ENCODE measurements at regions of chr15 and their contacts with region 1.

Region 1: GRCh38 chr15:86164232-86164898 is 84.7 kb downstream of the AGBL1 start:
- DNase-seq: peak; percentile 75 to 76
- ATAC-seq: peak; percentile 72 to 81
- H3K4me3 ChIP-seq: no peak overlapping the region
- H3K27ac ChIP-seq: peak overlapping the region; percentile 85 to 98 (median 98)
- H3K4me1 ChIP-seq: peaks cover 63 to 67% of the 10 kb centered on the region in 2 donors
- H3K27me3 ChIP-seq: no peaks in the 10 kb centered on the region
- CTCF ChIP-seq: no peak
- POLR2A ChIP-seq: peak; percentile 56 to 78

Region 2: GRCh38 chr15:85318048-85318731 is 846.2 kb before region 1 on chr15:
- in situ Hi-C with region 1: no loop called
- intact Hi-C with region 1: no loop called
- DNase-seq: no peak
- ATAC-seq: no peak
- H3K4me3 ChIP-seq: no peak overlapping the region
- H3K27ac ChIP-seq: no peak overlapping the region
- H3K4me1 ChIP-seq: no peaks in the 10 kb centered on the region
- H3K27me3 ChIP-seq: no peaks in the 10 kb centered on the region
- CTCF ChIP-seq: no peak
- POLR2A ChIP-seq: no peak

Region 3: GRCh38 chr15:86079508-86080266 is 84.7 kb before region 1 on chr15 and contains the start of gene AGBL1:
- in situ Hi-C with region 1: no loop called
- intact Hi-C with region 1: loop called (anchors 1 kb)
- DNase-seq: peak; percentile 87 to 98
- ATAC-seq: peak; percentile 78 to 83
- H3K4me3 ChIP-seq: peak within 1 kb of the TSS; percentile 19 to 44 (median 31)
- H3K27ac ChIP-seq: peak within 1 kb of the TSS; percentile 89 to 92 (median 90)
- H3K4me1 ChIP-seq: peaks cover 81 to 85% of the 10 kb centered on the region in 2 donors
- H3K27me3 ChIP-seq: no peaks in the 10 kb centered on the region
- CTCF ChIP-seq: peak in 3 of 5 experiments; percentile 21 to 27 (median 24)
- POLR2A ChIP-seq: peak; percentile 42 to 85
- total RNA-seq, gene AGBL1: 3.8 to 29.7 (median 15.9) TPM

Region 4: GRCh38 chr15:86765281-86765680 is 600.9 kb after region 1 on chr15:
- in situ Hi-C with region 1: no loop called
- intact Hi-C with region 1: no loop called
- DNase-seq: no peak
- ATAC-seq: no peak
- H3K4me3 ChIP-seq: no peak overlapping the region
- H3K27ac ChIP-seq: no peak overlapping the region
- H3K4me1 ChIP-seq: peaks cover 4% of the 10 kb centered on the region in 2 donors
- H3K27me3 ChIP-seq: no peaks in the 10 kb centered on the region
- CTCF ChIP-seq: no peak
- POLR2A ChIP-seq: no peak

Measured in gastrocnemius medialis (tissue), 4 donors.